Cardiac septum (tissue), 1 donor: ENCODE measurements at regions of chr1 and their contacts with region 1.

Region 1: GRCh38 chr1:32013386-32014198 is at the start of gene KHDRBS1:
- DNase-seq: peak; percentile 99
- total RNA-seq, gene KHDRBS1: 73.1 TPM

Region 2: GRCh38 chr1:31991182-31991581 is 22.4 kb before region 1 on chr1:
- intact Hi-C with region 1: no loop called
- DNase-seq: no peak

Region 3: DNA sequence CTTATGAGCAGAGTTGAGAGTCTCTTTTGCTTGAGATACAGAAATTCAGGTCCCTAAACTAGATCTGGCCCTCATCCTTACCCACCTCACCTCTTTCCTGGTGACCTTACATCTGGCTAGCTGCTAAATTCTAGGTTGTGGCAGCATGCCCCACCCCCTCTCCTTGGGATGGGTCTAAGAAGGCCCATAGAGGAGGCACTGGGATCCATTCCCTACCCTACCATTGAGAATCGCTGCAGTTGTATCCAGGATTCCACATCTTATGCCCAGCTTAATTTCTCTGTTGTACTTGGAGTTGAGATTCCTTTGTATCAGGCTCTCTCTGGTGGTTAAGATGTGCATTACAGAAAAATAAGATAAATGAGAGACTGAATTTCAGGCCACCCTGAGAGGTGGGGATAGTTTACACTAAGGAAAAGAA is 49.7 kb after region 1 on chr1:
- intact Hi-C with region 1: loop called (anchors 5 kb)
- DNase-seq: no peak

Region 4: DNA sequence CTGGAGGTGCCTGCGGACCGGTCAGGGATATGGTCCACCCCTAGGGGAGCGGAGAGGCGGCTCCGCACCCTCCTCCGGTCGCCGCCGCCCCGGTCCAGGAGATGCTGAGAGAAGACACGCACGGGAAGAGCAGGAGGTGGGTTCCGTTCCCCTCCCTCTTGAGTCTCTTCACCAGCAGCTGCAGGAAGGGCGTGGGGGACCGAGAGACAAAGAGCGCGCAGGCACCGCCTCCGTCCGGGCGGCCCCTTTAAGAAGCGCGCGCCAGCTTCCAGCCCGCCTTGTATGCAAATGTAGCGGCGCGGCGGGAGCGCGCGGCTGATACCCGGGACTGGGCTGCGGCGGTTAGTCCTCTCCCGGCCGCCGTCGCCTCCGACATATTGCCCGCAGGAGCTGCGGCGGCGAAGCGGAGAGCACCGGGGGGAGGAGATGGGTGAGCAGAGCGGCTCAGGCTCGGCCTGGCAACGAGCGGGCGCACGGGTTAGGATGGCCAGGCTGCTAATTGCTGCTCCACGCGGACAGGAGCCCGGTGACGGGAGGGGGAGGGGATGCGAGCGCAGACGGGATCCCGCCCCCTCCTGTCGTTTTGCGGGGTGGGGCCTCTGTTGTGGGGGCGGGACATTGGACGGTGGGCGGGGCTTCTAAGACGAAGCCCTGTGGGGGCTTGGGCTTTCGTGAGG is 59.2 kb after region 1 on chr1 and contains the start of gene TMEM39B:
- intact Hi-C with region 1: loop called (anchors 1 kb)
- DNase-seq: peak; percentile 97
- total RNA-seq, gene TMEM39B: 7.1 TPM